Cardiac septum (tissue), 1 donor: ENCODE measurements at regions of chr2 and their contacts with region 1.

Region 1: DNA sequence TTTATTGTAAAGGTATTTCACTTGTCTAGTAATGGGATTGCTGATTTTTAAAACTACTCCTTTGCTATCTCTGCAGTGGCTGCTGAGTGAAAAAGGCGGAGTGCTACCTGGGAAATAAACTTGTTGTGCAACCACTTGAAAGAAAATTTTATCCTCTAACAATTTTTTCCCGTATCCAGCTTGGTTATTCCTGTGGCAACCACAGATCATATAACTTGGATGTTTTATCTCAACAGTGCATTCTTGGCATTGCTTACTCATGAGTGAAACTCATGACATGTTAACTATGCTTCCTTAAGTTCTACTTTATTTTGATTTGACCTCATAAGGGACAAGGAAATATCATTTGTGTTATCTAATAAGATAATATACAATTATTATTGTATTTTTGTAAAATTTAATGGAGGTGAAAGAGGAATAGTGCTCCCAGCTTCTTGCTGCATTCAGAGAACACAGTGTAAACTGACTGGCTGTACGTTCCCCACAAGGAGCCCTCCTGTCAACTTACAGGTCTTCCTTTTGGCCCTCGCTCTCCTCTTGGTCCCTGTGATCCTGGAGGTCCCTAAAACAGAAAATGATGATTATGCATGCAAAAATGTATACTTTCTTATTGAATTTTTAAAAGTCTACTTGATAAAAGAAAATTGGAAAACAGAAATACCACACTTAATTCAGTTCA is 82.7 kb downstream of the COL5A2 start:
- DNase-seq: no peak

Region 2: GRCh38 chr2:189287982-189288521 is 191.1 kb after region 1 on chr2:
- intact Hi-C with region 1: loop called (anchors 1 kb)
- DNase-seq: no peak

Region 3: DNA sequence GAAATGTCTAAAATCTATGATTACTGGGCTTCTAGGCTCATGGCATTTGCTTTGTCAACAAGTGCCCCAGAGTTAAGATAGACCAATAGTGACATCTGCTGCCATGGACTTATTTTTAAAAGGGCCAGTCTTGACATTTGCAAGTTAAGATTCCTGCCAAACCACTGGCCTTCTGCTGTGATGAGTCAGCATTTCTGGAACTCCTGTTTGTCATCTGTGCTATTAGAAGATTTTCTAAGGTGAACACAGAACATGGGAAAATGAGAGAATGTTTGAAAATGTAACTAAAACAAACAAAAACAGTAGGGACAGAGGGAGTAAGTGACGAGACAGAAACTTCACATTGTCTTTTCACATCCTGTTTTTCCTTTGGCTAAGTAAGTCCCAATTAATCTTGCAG is 250.6 kb after region 1 on chr2:
- intact Hi-C with region 1: loop called (anchors 10 kb)
- DNase-seq: no peak

Region 4: DNA sequence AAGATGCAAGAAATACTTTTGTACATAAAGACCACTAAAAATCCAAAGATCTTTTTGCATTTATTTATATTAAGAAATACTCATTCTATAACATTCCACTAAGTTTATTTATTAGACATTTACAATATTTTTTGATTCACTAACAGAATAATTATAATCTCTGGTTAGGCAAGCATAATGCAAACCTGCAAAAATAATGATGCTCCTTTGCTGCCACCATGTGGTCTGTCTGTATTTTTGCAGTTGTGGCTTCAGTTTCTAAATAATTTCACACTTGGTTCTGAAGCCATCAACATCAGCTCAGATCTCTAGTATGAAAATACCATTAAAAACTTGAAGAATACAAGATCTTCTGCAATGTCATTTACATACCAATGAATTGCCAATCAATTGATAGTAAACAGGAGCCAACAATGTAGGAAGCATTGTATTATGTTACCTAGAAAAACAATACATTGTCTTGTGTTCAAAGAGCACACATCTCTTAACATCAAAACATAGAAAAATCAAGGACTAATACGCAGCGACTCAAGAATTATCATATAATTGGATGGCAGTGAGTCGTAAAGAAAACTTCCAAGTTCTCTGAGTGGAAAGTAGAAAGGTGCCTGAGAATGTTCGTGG is 315.5 kb after region 1 on chr2:
- intact Hi-C with region 1: loop called (anchors 5 kb)
- DNase-seq: no peak